ENCODE measurements at regions of chr12 and their contacts with region 1.

Region 1: GRCh38 chr12:31245822-31246469 is 80.0 kb downstream of the SINHCAF start:
- DNase-seq: peak in 1 of 6 donors; percentile 36
- ATAC-seq: peak in 2 of 4 donors; percentile 56 to 61
- H3K4me3 ChIP-seq: no peak overlapping the region
- H3K27ac ChIP-seq: no peak overlapping the region
- H3K4me1 ChIP-seq: no peaks in the 10 kb centered on the region
- H3K27me3 ChIP-seq: no peaks in the 10 kb centered on the region
- CTCF ChIP-seq: no peak

Region 2: DNA sequence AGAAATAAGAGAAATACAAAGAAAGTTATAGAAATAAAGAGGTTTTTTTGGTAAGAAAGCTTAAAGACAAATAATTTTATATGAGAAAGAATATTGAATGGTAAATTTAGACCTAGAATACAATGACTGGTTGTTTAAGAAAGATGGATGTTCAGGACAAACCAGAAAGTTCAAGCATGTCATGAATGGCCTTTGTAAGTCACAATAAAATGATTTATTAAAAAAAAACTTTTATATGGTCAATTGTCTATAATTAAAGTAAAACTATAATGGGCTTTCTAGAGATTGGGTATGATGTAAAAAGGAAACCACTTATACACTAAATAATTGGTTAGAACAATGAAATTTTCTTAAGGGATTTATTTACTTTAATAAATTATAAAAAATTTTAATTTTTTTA is 471.3 kb before region 1 on chr12:
- intact Hi-C with region 1: no loop called
- DNase-seq: no peak
- ATAC-seq: no peak
- H3K4me3 ChIP-seq: no peak overlapping the region
- H3K27ac ChIP-seq: no peak overlapping the region
- H3K4me1 ChIP-seq: no peaks in the 10 kb centered on the region
- H3K27me3 ChIP-seq: no peaks in the 10 kb centered on the region
- CTCF ChIP-seq: no peak

Region 3: DNA sequence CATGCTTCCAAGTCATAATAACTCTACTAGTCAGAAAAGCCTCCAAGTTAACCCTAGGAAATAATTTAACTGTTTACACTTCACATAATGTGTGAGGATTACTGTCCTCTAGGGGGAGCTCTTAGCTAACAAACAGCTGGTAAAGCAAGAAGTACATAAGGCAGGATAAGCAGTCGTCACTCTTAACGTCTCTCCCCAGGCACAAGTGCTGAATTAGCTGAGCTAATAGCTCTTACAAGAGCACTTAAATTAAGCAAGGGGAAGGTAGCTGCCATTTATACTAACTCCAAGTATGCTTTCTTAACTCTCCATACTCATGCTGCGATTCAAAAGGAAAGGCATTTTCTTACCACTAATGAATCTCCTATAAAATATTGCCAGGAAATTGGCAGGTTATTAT is 398.7 kb before region 1 on chr12:
- intact Hi-C with region 1: loop called in 1 of 3 experiments (anchors 10 kb)
- DNase-seq: no peak
- ATAC-seq: no peak
- H3K4me3 ChIP-seq: no peak overlapping the region
- H3K27ac ChIP-seq: no peak overlapping the region
- H3K4me1 ChIP-seq: peaks cover 0 to 3% (median 0%) of the 10 kb centered on the region in 3 donors
- H3K27me3 ChIP-seq: no peaks in the 10 kb centered on the region
- CTCF ChIP-seq: peak in 3 of 4 donors; percentile 12 to 44 (median 36)

Region 4: DNA sequence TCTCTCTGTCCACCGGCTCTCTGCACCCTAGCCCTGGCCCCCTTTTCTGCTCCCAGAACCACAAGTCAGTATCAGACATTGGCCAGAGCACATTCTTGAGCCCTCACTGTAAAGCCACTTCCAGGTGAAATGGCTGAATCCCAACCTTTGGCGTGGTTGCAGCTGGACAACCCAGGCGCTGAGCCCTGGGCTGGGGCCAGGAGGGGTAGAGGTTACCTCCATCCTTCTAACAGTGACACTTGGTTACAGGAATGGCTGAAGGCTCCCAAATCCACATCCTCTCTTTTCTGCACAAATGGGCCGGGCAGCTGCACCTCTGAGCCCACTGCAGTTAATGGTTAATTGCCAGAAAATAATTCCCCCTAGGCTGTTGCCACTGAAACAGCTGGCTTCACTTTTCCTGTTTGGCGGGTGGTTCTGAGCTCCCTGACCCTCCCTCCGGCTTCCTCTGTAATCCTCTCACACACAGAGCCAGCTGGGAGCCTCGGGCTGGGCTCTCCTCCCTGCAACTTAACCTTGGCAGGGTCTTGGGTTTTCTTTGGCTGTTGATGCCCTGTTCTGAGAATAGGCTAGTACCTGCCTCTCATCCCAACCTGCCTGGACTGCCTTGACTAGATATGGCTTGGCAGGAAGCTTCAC is 275.3 kb before region 1 on chr12:
- intact Hi-C with region 1: loop called in 1 of 3 experiments (anchors 10 kb)
- DNase-seq: no peak
- ATAC-seq: peak in 2 of 4 donors; percentile 14 to 29
- H3K4me3 ChIP-seq: no peak overlapping the region
- H3K27ac ChIP-seq: no peak overlapping the region
- H3K4me1 ChIP-seq: no peaks in the 10 kb centered on the region
- H3K27me3 ChIP-seq: no peaks in the 10 kb centered on the region
- CTCF ChIP-seq: no peak